GM12878 (cell line): ENCODE measurements at regions of chr1 and their contacts with region 1.

Region 1: GRCh38 chr1:204473400-204473965 is 21.1 kb downstream of the PIK3C2B start:
- DNase-seq: no peak
- ATAC-seq: no peak
- H3K4me3 ChIP-seq: no peak overlapping the region
- H3K27ac ChIP-seq: no peak overlapping the region
- H3K4me1 ChIP-seq: peaks cover 6% of the 10 kb centered on the region; the same call in 1 of the 2 replicates
- H3K27me3 ChIP-seq: no peaks in the 10 kb centered on the region
- CTCF ChIP-seq: no peak
- EP300 ChIP-seq: no peak
- POLR2A ChIP-seq: no peak
- RAD21 ChIP-seq: no peak

Region 2: DNA sequence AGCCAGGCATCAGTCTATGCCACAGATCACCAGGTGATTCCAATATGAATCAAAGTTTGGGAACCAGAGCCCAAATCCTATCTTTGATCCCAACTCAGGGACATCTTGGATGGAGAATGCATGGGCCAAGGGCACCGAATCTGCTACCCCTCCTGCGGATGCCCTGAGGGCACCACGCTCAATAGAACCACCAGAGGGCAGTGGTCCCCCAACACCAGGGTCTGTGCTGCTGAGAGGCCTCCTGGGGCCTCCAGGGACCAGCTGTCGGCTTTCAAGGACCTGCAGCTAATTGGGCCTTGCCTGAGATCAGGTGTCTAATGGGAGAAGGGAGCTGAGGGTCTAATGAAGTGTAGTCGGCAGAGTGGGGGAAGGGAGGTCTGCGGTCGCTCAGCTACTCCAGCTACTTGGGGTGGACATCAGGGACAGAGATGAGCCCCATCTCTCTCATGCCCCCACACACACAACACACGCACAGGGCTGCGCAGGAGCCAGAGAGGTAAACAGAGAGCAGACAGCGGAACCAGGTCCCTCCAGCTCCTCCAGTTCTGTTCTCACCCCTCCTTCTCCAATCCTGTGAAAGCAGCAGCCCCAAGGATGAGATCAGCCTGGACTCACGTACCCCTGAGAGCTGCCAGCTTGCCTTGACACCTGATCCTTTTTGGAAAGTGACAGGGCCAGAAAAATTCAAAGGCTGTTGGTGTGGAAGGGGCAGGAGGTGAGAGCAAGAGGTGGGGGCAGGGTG is 26.9 kb before region 1 on chr1:
- CTCF ChIA-PET with region 1: interaction called, 2,021 read pairs
- POLR2A ChIA-PET with region 1: interaction called, 15 read pairs
- RAD21 ChIA-PET with region 1: interaction called, 101 read pairs
- SMC1A ChIA-PET with region 1: interaction called, 112 read pairs
- in situ Hi-C with region 1: no loop called
- intact Hi-C with region 1: no loop called
- DNase-seq: no peak
- ATAC-seq: peak; percentile 98
- H3K4me3 ChIP-seq: no peak overlapping the region
- H3K27ac ChIP-seq: no peak overlapping the region
- H3K4me1 ChIP-seq: peaks cover 5% of the 10 kb centered on the region
- H3K27me3 ChIP-seq: no peaks in the 10 kb centered on the region
- CTCF ChIP-seq: peak; percentile 80 to 92 (median 89); a peak in 5 of 6 replicates
- EP300 ChIP-seq: no peak
- POLR2A ChIP-seq: no peak
- RAD21 ChIP-seq: peak; percentile 99

Region 3: GRCh38 chr1:204633665-204634064 is 160.2 kb after region 1 on chr1:
- CTCF ChIA-PET with region 1: no interaction called
- POLR2A ChIA-PET with region 1: no interaction called
- RAD21 ChIA-PET with region 1: no interaction called
- SMC1A ChIA-PET with region 1: no interaction called
- in situ Hi-C with region 1: no loop called
- intact Hi-C with region 1: no loop called
- DNase-seq: no peak
- ATAC-seq: no peak
- H3K4me3 ChIP-seq: no peak overlapping the region
- H3K27ac ChIP-seq: no peak overlapping the region
- H3K4me1 ChIP-seq: no peaks in the 10 kb centered on the region
- H3K27me3 ChIP-seq: peaks cover 0 to 3% of the 10 kb centered on the region in 2 experiments; a peak in 3 of 4 replicates
- CTCF ChIP-seq: no peak
- EP300 ChIP-seq: no peak
- POLR2A ChIP-seq: no peak
- RAD21 ChIP-seq: no peak